Caco-2 (cell line): ENCODE measurements at regions of chr7 and their contacts with region 1.

Region 1: GRCh38 chr7:138316421-138317043 is 143.5 kb upstream of the TRIM24 start:
- DNase-seq: peak in 1 of 2 experiments; percentile 44
- H3K4me3 ChIP-seq: no peak overlapping the region
- H3K4me3 Mint-ChIP-seq: no peak overlapping the region
- H3K27ac Mint-ChIP-seq: no peak overlapping the region
- H3K4me1 ChIP-seq: peaks cover 23% of the 10 kb centered on the region
- H3K4me1 Mint-ChIP-seq: no peaks in the 10 kb centered on the region
- H3K27me3 ChIP-seq: no peaks in the 10 kb centered on the region
- H3K27me3 Mint-ChIP-seq: no peaks in the 10 kb centered on the region
- CTCF ChIP-seq: no peak

Region 2: DNA sequence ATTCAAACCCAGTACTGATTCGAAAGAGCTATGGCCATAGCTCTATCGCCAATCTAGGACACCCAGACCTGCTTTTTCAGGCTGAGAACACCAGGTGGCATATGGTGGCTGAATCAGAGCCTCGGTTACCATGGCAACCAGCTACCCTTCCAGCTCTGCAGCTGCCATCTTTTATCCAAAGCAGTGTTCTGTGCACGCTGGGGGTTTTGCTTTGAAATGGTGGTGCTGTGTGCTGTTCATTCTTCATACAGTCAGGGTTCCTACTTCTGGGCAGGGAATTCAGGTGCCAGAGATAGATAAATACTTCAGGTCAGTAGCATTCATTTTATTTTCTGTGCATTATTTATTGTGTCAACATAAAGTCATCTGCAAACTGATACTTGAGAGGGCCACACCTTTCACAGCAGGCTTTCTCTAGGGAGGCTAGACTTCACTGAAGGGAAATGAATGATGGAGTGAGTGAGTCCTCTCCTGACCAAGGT is 154.9 kb before region 1 on chr7:
- CTCF ChIA-PET with region 1: no interaction called
- POLR2A ChIA-PET with region 1: no interaction called
- intact Hi-C with region 1: loop called (anchors 10 kb)
- DNase-seq: peak; percentile 83 to 92
- H3K4me3 ChIP-seq: no peak overlapping the region
- H3K4me3 Mint-ChIP-seq: no peak overlapping the region
- H3K27ac Mint-ChIP-seq: no peak overlapping the region
- H3K4me1 ChIP-seq: peaks cover 14% of the 10 kb centered on the region
- H3K4me1 Mint-ChIP-seq: peaks cover 12% of the 10 kb centered on the region
- H3K27me3 ChIP-seq: no peaks in the 10 kb centered on the region
- H3K27me3 Mint-ChIP-seq: no peaks in the 10 kb centered on the region
- CTCF ChIP-seq: peak; percentile 53 to 70

Region 3: GRCh38 chr7:138407792-138408191 is 91.3 kb after region 1 on chr7:
- CTCF ChIA-PET with region 1: no interaction called
- POLR2A ChIA-PET with region 1: no interaction called
- intact Hi-C with region 1: no loop called
- DNase-seq: no peak
- H3K4me3 ChIP-seq: no peak overlapping the region
- H3K4me3 Mint-ChIP-seq: no peak overlapping the region
- H3K27ac Mint-ChIP-seq: no peak overlapping the region
- H3K4me1 ChIP-seq: no peaks in the 10 kb centered on the region
- H3K4me1 Mint-ChIP-seq: peaks cover 14% of the 10 kb centered on the region
- H3K27me3 ChIP-seq: no peaks in the 10 kb centered on the region; the same call in 1 of the 2 replicates
- H3K27me3 Mint-ChIP-seq: no peaks in the 10 kb centered on the region
- CTCF ChIP-seq: no peak